ENCODE measurements at regions of chr1 and their contacts with region 1.

Region 1: DNA sequence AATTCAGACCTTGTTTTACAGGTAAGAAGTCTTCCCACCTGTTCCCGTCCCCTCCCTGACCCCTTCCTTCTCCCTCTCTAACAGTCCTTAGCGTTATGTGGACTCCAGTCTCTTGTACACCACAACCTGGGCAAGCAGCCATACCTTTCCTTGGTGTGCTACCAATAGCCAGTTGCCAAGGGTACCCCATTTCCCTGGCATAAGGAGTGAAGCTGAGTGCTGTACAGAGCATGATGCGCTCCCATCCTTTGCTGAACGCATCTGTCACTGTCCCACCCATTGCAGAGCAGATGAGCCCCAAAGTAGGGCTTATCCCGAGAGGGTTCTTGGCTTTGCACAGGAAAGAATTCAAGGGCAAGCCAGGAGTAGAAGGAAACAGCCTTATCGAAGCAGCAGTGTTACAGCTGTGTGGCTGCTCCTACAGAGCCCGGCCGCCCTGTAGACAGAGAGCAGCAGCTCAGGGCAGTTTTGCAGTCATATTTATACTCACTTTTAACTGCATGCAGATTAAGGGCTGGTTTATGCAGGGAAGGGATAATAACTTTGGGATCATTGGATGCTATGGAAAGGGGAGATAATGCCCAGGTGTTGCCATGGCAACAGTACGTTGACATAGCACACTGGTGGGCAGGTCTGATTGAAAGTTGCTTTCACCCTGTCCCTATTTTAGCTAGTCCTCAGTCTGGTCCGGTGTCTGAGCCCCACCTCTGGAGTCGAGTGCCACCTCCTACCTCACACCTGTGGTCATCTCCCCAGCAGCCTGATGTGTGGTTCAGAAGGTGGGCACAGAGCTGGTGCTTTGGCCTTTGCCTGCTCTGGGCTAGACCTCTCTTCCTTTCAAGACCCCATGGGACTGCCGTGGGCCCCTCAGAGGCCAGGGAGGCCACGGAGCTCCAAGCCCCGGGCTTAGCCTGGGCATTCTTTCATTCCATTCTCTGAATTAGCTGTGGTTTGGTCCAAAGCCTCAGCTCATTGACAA is 5.1 kb downstream of the FHAD1 start:
- DNase-seq: no peak
- H3K4me3 ChIP-seq: no peak overlapping the region
- CTCF ChIP-seq: no peak

Region 2: GRCh38 chr1:15196807-15197530 is 55.2 kb before region 1 on chr1:
- in situ Hi-C with region 1: no loop called
- DNase-seq: no peak
- H3K4me3 ChIP-seq: no peak overlapping the region
- CTCF ChIP-seq: no peak

Region 3: DNA sequence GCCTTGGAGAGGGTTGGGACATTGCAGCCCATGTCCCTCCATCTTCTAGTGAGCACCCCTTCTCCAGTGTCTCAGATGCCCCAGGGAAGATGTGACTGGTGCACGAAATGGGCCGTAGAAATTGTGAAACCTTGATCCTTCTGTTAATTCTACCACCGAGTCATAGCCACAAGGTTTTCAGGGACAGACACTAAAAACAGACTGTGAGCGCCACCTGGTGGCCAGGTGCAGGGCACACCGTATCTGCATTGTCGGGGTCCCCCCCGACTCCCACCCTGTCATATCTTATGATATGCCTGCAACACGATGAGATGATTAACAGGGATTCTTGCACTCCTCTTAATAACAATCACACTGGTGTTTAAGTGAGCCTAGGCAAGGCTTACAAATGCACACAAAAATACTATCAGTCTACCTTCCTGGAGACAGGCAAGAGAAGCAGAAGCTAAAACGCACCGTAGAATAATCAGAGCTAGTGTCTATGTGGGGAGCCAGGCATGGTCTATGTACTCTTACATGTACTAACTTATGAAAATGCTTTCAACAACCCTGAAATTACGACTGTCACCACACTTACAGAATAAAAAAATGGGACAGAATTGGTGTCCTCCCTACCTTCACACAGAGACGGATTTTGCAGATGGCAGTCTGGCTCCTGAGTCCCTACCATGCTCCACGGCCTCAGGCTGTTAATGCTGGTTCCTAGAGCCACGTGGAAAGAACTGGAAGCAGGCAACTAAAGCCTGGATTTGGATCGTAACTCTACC is 52.7 kb after region 1 on chr1:
- in situ Hi-C with region 1: no loop called
- DNase-seq: no peak
- H3K4me3 ChIP-seq: no peak overlapping the region
- CTCF ChIP-seq: peak; percentile 74

Region 4: GRCh38 chr1:15409388-15410222 is 157.5 kb after region 1 on chr1 and contains the start of gene EFHD2:
- in situ Hi-C with region 1: loop called (anchors 5 kb)
- DNase-seq: no peak
- H3K4me3 ChIP-seq: peak within 1 kb of the TSS; percentile 87
- CTCF ChIP-seq: no peak

Measured in astrocyte of the cerebellum (primary cell).